HCT116 (cell line): ENCODE measurements at regions of chr10 and their contacts with region 1.

Region 1: DNA sequence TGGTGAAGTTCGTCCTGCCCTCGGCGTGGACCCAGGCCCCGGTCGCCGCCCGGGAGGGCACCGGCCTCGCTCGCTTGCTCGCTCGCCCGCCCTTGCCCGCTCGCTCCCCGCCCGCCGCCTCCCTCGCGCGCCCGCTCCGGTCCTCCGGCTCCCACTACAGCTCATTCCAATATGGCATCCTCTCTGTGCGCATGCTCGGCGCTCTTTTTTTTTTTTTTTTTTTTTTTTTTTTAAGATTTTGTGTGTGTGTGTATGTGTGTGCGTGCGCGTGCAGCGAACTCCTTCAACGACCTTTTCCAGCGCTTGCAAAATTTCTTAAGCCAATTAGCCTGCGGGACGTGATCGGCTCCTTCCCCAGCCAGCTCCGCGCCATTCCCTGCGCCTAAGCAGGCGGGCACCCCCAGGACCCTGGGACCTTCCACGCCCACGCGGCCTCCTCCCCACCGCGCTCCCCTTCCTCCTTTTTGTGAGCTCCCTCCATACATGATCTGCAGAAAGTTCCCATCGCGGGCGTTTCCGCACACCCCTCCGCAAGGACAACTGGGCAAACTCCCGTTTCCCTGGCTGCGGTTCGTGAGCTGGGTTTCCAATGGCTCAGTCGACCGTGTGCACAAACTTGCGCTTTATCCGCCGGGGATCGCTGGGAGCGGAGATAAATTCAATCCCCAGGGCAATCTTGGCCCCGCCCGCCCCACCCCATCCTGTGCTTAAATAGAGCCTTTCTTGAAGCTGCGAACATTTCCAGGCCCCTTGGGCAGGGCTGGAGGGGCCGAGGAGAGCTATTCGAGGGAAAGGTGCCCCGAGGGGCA is at the start of gene SFMBT2:
- DNase-seq: no peak
- ATAC-seq: no peak
- H3K4me3 ChIP-seq: no peak within 1 kb of the TSS
- H3K27ac ChIP-seq: no peak within 1 kb of the TSS
- H3K4me1 ChIP-seq: no peaks in the 10 kb centered on the region
- H3K27me3 ChIP-seq: no peaks in the 10 kb centered on the region; the same call in 1 of the 2 replicates
- CTCF ChIP-seq: no peak
- POLR2A ChIP-seq: no peak
- RAD21 ChIP-seq: no peak
- total RNA-seq, gene SFMBT2: 0.02 TPM

Region 2: DNA sequence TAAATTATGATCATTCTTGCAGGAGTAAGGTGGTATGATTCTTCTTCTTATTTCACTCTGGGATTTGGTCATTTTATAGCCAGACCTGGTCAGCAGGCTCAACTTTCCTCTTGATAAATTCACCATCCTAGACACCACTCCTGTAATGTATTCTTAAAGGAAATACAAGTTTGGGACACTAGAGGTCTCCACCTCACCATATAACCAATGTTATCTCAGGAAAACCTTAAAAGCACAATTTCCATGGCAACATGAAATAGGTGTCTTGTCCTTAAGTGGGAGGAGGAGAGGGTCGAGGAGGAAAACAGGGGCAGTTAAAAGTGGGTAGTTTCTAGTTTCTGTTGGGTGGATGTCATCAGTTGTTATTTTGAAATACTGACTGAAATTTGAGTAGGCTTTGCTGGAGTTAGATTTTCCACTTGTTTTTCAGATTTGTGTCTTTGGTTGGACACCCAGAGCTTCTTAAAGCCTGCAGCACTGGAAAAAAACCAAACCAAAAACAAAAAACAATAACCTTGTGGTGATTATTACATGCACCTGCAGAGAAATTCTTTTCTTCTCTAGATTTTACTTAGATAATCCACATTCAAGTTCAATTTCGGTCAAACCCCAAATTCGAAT is 994.1 kb before region 1 on chr10:
- CTCF ChIA-PET with region 1: no interaction called
- POLR2A ChIA-PET with region 1: no interaction called
- RAD21 ChIA-PET with region 1: no interaction called
- intact Hi-C with region 1: loop called (anchors 10 kb)
- DNase-seq: peak; percentile 35
- ATAC-seq: peak; percentile 86
- H3K4me3 ChIP-seq: no peak overlapping the region
- H3K27ac ChIP-seq: no peak overlapping the region
- H3K4me1 ChIP-seq: no peaks in the 10 kb centered on the region
- H3K27me3 ChIP-seq: peaks cover 33% of the 10 kb centered on the region
- CTCF ChIP-seq: peak; percentile 56 to 76 (median 67); a peak in 5 of 6 replicates
- POLR2A ChIP-seq: no peak
- RAD21 ChIP-seq: peak; percentile 77

Region 3: GRCh38 chr10:6701289-6701688 is 709.8 kb before region 1 on chr10:
- CTCF ChIA-PET with region 1: no interaction called
- POLR2A ChIA-PET with region 1: no interaction called
- RAD21 ChIA-PET with region 1: no interaction called
- intact Hi-C with region 1: loop called (anchors 10 kb)
- DNase-seq: no peak
- ATAC-seq: peak; percentile 80
- H3K4me3 ChIP-seq: no peak overlapping the region
- H3K27ac ChIP-seq: no peak overlapping the region
- H3K4me1 ChIP-seq: no peaks in the 10 kb centered on the region
- H3K27me3 ChIP-seq: peaks cover 61% of the 10 kb centered on the region
- CTCF ChIP-seq: peak; percentile 14 to 30 (median 28); a peak in 4 of 6 replicates
- POLR2A ChIP-seq: no peak
- RAD21 ChIP-seq: peak; percentile 40; the same call in 1 of the 2 replicates

Region 4: GRCh38 chr10:6915307-6915706 is 495.8 kb before region 1 on chr10:
- CTCF ChIA-PET with region 1: no interaction called
- POLR2A ChIA-PET with region 1: no interaction called
- RAD21 ChIA-PET with region 1: no interaction called
- intact Hi-C with region 1: loop called (anchors 2 kb)
- DNase-seq: no peak
- ATAC-seq: no peak
- H3K4me3 ChIP-seq: no peak overlapping the region
- H3K27ac ChIP-seq: no peak overlapping the region
- H3K4me1 ChIP-seq: no peaks in the 10 kb centered on the region
- H3K27me3 ChIP-seq: peaks cover 18% of the 10 kb centered on the region
- CTCF ChIP-seq: no peak
- POLR2A ChIP-seq: no peak
- RAD21 ChIP-seq: no peak